ENCODE measurements at regions of chr12 and their contacts with region 1.

Region 1: DNA sequence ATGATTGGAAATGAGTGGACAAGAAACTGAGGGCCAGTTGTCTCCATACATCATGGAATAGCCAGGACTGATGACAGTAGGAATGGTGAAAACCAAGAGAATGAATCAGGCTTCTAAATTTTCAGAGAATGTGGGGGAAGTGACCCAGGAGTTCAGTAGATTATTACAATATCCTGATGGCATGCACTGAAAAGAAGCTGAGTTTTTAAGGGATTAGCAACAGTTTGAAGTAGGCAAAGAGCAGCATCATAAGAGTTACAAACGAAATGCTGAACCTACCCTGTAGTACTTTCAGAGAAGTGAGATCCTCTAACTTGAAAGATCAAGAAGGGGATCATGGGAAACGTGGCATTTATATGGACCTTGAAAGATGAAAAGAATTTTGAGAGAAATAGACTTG is 13.2 kb downstream of the SLC2A14 start:
- DNase-seq: no peak
- H3K4me3 ChIP-seq: no peak overlapping the region
- H3K27ac ChIP-seq: no peak overlapping the region
- H3K4me1 ChIP-seq: no peaks in the 10 kb centered on the region
- H3K27me3 ChIP-seq: no peaks in the 10 kb centered on the region
- CTCF ChIP-seq: no peak
- POLR2A ChIP-seq: no peak

Region 2: GRCh38 chr12:7832059-7832696 is 27.4 kb before region 1 on chr12:
- CTCF ChIA-PET with region 1: interaction called, 7 read pairs
- POLR2A ChIA-PET with region 1: no interaction called
- dilution Hi-C with region 1: no loop called
- intact Hi-C with region 1: loop called (anchors 2 kb)
- DNase-seq: peak; percentile 58
- H3K4me3 ChIP-seq: no peak overlapping the region
- H3K27ac ChIP-seq: no peak overlapping the region
- H3K4me1 ChIP-seq: no peaks in the 10 kb centered on the region
- H3K27me3 ChIP-seq: peaks cover 0 to 2% of the 10 kb centered on the region in 2 experiments
- CTCF ChIP-seq: peak; percentile 44 to 45
- POLR2A ChIP-seq: no peak

Region 3: GRCh38 chr12:8045952-8046944 is 186.7 kb after region 1 on chr12:
- CTCF ChIA-PET with region 1: interaction called, 3 read pairs
- POLR2A ChIA-PET with region 1: no interaction called
- dilution Hi-C with region 1: no loop called
- intact Hi-C with region 1: loop called (anchors 1 kb)
- DNase-seq: peak; percentile 81
- H3K4me3 ChIP-seq: no peak overlapping the region
- H3K27ac ChIP-seq: no peak overlapping the region
- H3K4me1 ChIP-seq: no peaks in the 10 kb centered on the region
- H3K27me3 ChIP-seq: no peaks in the 10 kb centered on the region
- CTCF ChIP-seq: peak; percentile 83 to 85
- POLR2A ChIP-seq: no peak